Head of caudate nucleus (tissue), 42 donors: ENCODE measurements at regions of chr7 and their contacts with region 1.

Region 1: DNA sequence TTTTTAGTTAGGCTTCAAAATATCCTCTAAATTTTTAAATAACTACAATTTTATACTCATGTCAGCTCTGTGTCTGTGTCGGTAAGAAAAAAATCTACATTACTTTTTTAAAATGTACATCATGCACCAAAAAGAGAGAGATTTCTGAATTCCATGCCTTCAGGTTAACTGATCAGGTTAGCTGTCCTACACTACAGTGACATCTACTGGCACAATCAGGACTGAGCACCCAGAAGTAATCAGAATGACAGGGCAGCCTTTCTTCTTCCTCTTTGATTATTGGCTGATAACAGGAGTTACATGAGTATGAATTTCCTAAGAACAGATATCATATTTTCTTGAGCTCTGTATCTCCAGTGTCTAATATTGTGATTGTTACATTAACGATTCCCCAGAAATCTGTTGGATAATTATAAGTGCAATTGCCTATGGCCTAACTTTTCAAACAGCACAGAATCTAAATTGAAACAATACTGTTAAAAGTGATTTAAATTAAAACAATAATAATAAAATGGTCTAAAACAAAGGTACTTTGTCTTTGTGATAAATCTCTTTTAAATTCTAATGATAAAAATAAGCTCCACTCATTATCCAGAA is 41.8 kb upstream of the HYCC1 start:
- DNase-seq: peak in 35 of 42 donors; percentile 11 to 88 (median 66)

Region 2: DNA sequence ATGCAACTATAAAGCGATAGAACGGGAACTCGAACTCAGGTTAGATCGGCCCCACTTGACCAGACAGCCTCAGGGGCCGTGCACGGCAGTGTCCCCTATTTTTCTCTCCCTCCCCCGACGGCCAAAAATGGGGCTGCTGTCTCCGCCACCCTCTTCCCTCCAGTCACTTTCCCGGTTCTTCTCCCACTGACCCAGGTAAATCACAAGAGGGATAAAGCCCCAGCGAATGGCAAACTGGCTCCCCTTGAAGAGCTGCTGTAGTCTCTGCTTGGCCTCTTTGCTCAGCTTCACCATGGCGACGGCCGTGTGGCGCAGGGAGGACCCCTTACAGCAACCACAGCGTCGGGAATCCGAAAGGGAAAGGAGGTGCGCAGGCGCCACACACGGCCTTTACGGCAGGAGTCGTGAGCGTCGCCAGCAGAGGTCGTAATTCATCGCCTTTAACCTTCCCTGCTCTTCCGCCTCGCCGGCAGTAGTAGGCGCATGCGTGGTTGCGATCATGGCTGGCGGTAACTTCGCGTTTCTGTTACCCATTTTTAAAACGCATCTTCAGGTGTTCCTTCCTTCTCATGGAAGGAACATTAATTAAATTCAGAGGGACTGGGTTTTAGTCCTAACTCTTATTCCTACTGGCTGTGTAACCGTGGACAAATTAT is 233.1 kb before region 1 on chr7 and contains the start of gene TOMM7:
- intact Hi-C with region 1: loop called (anchors 10 kb)
- DNase-seq: peak; percentile 80 to 96 (median 91)

Region 3: DNA sequence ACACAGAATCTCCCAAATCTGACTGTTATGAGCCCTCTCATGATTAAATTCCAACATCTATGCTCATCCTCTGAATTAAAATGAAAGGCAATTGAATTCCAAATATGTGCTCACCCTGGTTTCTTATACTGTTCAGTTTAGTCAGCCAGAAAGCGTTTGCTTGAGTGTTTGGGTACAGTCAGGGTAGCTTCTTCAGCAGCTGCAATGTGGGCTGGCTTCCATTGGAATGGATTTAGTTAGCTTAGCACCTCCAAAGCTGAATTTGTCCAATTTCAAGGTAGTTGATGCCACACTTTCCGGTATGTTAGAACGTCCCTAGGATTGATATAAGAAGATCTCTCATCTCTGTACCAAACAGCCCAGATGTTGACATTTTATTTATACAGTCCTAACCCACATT is 59.2 kb after region 1 on chr7:
- intact Hi-C with region 1: no loop called
- DNase-seq: peak in 6 of 42 donors; percentile 6 to 40 (median 20)

Region 4: GRCh38 chr7:23161482-23161881 is 105.8 kb after region 1 on chr7:
- intact Hi-C with region 1: no loop called
- DNase-seq: no peak

Region 5: GRCh38 chr7:23742051-23742450 is 686.4 kb after region 1 on chr7:
- intact Hi-C with region 1: no loop called
- DNase-seq: no peak